ENCODE measurements at regions of chr12 and their contacts with region 1.

Region 1: DNA sequence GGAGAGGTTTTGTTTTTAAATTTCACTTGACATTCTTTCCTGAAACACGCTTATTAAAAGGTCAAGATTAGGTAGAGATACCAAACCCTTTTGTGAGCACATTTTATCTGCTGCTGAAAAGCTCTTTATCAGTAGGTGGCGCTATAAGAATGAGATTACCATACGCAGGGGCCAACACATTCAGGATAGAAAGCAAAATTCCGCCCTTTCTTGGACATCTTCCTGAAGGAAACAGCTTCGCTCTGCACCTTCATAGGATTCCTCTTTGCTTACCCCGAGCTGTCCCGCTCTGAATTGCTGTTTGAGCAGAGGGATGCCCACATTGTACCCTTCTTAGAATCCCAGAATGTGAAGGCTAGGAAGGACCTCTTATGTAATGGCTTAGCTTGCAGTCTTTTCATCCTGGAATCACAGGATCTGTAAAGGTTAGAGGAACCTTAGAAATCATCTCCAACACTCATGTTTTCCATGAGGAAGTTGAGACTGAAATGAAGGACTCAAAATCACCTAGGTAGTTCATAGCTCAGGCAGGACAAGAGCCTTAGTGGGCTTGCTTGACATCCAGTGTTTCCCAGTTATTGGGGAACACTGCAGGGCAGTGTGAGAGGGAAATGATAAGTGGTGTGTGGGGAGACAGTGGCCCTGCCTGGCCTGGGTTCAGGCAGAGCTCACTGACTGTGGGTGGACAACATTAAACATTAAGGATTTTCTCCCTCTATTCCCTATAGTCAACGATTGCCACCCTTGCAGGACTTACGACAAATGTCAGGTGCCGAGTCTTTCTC is 38.7 kb upstream of the CRY1 start:
- DNase-seq: peak in 1 of 3 donors; percentile 50
- ATAC-seq: peak; percentile 61
- H3K4me3 ChIP-seq: no peak overlapping the region
- H3K4me1 ChIP-seq: no peaks in the 10 kb centered on the region
- CTCF ChIP-seq: peak; percentile 53

Region 2: DNA sequence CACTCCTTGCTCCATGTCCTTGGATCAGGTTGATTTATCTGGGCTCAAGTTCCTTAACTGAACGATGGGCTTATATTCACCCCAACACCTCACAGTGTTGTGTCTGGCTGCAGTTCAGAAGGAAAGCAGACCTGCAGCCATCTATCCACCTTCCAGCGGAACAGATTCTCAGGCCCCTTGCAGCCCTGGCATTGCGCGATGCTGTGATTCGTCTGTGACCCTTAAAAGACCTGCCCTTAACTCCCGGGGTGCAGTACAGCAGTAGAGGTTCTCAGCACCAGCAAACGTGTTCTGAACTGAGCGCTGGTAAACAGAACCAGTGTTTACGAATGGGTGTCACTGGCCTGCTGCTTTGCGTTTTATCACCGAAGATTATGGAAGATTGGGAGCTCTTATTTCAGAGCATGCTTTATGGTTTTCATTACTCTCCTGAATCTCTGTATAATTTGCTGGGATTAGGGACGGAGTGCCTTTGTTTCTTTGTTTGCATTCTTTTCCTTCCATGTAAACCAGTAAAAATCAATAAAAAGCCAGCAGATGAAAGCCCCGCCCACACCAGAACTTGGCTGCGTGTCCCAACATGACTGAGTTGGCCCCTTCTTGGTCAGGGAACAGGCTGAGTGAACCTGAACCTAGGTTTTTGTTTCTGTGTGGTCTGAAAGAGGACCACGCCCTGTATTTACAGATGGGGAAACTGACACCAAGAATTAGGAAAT is 248.0 kb after region 1 on chr12:
- intact Hi-C with region 1: no loop called
- DNase-seq: peak in 2 of 3 donors; percentile 34 to 45
- ATAC-seq: peak; percentile 26
- H3K4me3 ChIP-seq: no peak overlapping the region
- H3K4me1 ChIP-seq: no peaks in the 10 kb centered on the region
- CTCF ChIP-seq: no peak

Region 3: GRCh38 chr12:107607464-107608392 is 475.7 kb after region 1 on chr12:
- intact Hi-C with region 1: loop called (anchors 5 kb)
- DNase-seq: peak; percentile 77 to 86 (median 84)
- ATAC-seq: peak; percentile 82
- H3K4me3 ChIP-seq: no peak overlapping the region
- H3K4me1 ChIP-seq: no peaks in the 10 kb centered on the region
- CTCF ChIP-seq: peak; percentile 81

Measured in mucosa of descending colon (tissue), 3 donors.